ENCODE measurements at regions of chrX and their contacts with region 1.

Region 1: DNA sequence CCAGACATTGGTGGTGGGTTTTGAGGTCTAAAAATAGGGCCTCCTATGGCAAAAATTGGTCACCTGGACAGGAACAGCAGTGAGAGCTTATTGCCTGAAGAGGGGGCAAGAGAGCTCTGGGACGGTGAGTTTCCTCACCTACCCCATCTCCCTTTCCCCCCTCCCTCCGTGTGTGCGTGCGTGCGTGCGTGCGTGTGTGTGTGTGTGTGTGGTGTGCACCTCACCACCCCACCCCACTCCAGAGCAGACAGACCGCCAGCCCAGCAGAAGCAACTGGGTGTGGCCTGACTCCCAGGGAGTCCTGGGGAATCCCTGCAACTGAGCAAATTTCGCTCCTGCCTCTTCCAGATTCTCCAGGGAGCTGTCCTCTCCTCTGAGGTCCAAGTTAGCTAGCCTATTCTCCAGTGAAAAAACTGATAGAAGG is 44.7 kb downstream of the PRPS1 start:
- DNase-seq: peak; percentile 62
- ATAC-seq: peak; percentile 41
- H3K4me3 Mint-ChIP-seq: peak overlapping the region; percentile 50
- H3K27ac Mint-ChIP-seq: peak overlapping the region; percentile 96
- H3K4me1 Mint-ChIP-seq: peaks cover 50% of the 10 kb centered on the region
- H3K27me3 Mint-ChIP-seq: no peaks in the 10 kb centered on the region
- CTCF ChIP-seq: no peak

Region 2: DNA sequence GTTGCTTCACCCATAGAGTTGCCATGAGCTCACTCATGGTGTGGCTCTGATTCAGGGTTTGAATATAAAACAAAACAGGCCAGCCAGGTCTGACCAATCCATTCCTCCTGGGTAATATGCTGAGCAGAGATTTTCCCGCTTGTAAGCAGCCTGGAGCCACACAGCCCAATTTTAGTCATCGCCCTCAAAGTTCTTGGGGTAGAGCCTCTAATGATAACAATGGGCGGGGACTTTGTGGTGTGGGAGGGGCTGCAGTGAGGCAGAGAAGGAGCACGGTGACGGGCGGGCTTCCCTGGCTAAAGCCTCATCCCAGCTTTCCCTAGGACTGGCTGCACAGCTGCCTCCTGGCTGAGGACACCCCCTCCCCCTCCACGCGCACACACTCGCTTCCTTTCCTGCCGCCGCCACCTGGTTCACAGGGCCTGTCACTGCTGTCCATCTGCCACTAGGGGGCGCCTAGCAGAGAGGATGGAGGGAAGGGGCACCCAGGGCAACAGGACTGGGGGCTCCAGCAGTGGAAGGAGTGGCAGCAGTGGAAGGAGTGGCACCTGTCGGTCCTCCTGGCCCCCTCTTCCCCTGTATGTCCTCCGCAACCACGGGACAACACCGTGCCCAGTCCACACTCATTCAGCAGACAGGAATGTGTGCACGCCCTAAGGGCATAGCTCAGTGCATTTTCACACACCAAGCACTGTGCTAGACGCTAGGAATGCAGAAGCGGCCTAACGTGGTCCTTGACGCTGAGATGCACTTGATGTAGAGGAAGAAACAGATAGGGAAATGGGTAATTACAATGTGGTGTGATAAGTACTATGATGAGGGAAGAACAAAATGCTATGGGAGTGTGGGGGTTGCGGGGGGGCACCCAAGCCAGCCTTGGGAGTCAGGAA is 17.9 kb before region 1 on chrX:
- CTCF ChIA-PET with region 1: interaction called, 25 read pairs
- POLR2A ChIA-PET with region 1: interaction called, 8 read pairs
- intact Hi-C with region 1: loop called (anchors 1 kb)
- DNase-seq: peak; percentile 40
- ATAC-seq: peak; percentile 86
- H3K4me3 Mint-ChIP-seq: no peak overlapping the region
- H3K27ac Mint-ChIP-seq: no peak overlapping the region
- H3K4me1 Mint-ChIP-seq: peaks cover 10% of the 10 kb centered on the region
- H3K27me3 Mint-ChIP-seq: no peaks in the 10 kb centered on the region
- CTCF ChIP-seq: no peak

Region 3: GRCh38 chrX:107684956-107685385 is 12.0 kb after region 1 on chrX:
- CTCF ChIA-PET with region 1: no interaction called
- POLR2A ChIA-PET with region 1: interaction called, 10 read pairs
- intact Hi-C with region 1: no loop called
- DNase-seq: no peak
- ATAC-seq: no peak
- H3K4me3 Mint-ChIP-seq: no peak overlapping the region
- H3K27ac Mint-ChIP-seq: no peak overlapping the region
- H3K4me1 Mint-ChIP-seq: peaks cover 25% of the 10 kb centered on the region
- H3K27me3 Mint-ChIP-seq: no peaks in the 10 kb centered on the region
- CTCF ChIP-seq: no peak

Region 4: GRCh38 chrX:107710617-107711391 is 37.8 kb after region 1 on chrX:
- CTCF ChIA-PET with region 1: interaction called, 128 read pairs
- POLR2A ChIA-PET with region 1: interaction called, 440 read pairs
- intact Hi-C with region 1: loop called (anchors 1 kb)
- DNase-seq: peak; percentile 18
- ATAC-seq: peak; percentile 62
- H3K4me3 Mint-ChIP-seq: peak overlapping the region; percentile 78
- H3K27ac Mint-ChIP-seq: peak overlapping the region; percentile 99
- H3K4me1 Mint-ChIP-seq: peaks cover 52% of the 10 kb centered on the region
- H3K27me3 Mint-ChIP-seq: no peaks in the 10 kb centered on the region
- CTCF ChIP-seq: no peak

Region 5: GRCh38 chrX:107716816-107717700 is 44.1 kb after region 1 on chrX:
- CTCF ChIA-PET with region 1: interaction called, 128 read pairs
- POLR2A ChIA-PET with region 1: interaction called, 440 read pairs
- intact Hi-C with region 1: loop called (anchors 1 kb)
- DNase-seq: peak; percentile 73
- ATAC-seq: peak; percentile 56
- H3K4me3 Mint-ChIP-seq: peak overlapping the region; percentile 94
- H3K27ac Mint-ChIP-seq: peak overlapping the region; percentile 99
- H3K4me1 Mint-ChIP-seq: peaks cover 81% of the 10 kb centered on the region
- H3K27me3 Mint-ChIP-seq: no peaks in the 10 kb centered on the region
- CTCF ChIP-seq: no peak

Region 6: GRCh38 chrX:107741404-107741790 is 68.4 kb after region 1 on chrX:
- CTCF ChIA-PET with region 1: no interaction called
- POLR2A ChIA-PET with region 1: interaction called, 14 read pairs
- intact Hi-C with region 1: no loop called
- DNase-seq: peak; percentile 14
- ATAC-seq: peak; percentile 12
- H3K4me3 Mint-ChIP-seq: peak overlapping the region; percentile 89
- H3K27ac Mint-ChIP-seq: peak overlapping the region; percentile 98
- H3K4me1 Mint-ChIP-seq: peaks cover 20% of the 10 kb centered on the region
- H3K27me3 Mint-ChIP-seq: no peaks in the 10 kb centered on the region
- CTCF ChIP-seq: no peak